ENCODE measurements at regions of chr4 and their contacts with region 1.

Region 1: DNA sequence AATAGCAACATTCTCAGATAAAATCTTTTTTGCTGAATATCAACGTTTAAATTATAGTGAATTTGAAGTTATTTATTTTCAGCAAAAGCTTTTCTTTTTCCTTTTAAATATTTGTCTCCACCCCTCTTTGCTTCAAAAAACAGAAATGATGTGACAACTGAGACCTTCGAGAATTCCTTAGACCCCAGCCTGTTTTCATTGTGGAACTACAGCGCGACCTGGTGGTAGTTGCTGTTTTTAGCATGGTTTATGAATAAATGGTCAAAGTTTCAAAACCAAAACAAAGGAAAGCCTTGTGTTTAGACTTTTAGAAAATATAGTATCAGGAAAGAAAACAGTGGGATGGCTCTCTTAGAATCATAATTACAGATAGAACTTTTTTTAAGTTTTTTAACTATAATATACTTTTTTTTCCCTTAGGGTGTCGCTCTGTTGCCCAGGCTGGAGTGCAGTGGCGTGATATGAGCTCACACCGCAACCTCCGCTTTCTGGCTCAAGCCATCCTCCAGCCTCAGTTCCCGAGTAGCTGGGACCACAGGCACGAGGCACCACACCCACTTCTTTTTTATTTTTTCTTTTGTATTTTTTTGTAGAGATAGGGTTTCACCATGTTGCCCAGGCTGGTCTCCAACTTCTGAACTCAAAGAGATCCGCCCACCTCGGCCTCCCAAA is 26.8 kb upstream of the TMEM184C start:
- DNase-seq: peak in 1 of 2 experiments; percentile 82
- H3K4me3 ChIP-seq: no peak overlapping the region
- H3K27ac ChIP-seq: no peak overlapping the region
- H3K4me1 ChIP-seq: peaks cover 0 to 3% (median 0%) of the 10 kb centered on the region in 4 experiments; a peak in 1 of 7 replicates
- H3K27me3 ChIP-seq: no peaks in the 10 kb centered on the region
- CTCF ChIP-seq: peak in 2 of 3 experiments; percentile 70; a peak in 3 of 4 replicates
- EP300 ChIP-seq: no peak
- POLR2A ChIP-seq: no peak
- RAD21 ChIP-seq: peak; percentile 93 to 95

Region 2: GRCh38 chr4:147111033-147111367 is 479.4 kb before region 1 on chr4:
- CTCF ChIA-PET with region 1: interaction called, 20 read pairs
- POLR2A ChIA-PET with region 1: no interaction called
- DNase-seq: no peak
- H3K4me3 ChIP-seq: no peak overlapping the region
- H3K27ac ChIP-seq: no peak overlapping the region
- H3K4me1 ChIP-seq: no peaks in the 10 kb centered on the region
- H3K27me3 ChIP-seq: no peaks in the 10 kb centered on the region
- CTCF ChIP-seq: no peak
- EP300 ChIP-seq: no peak
- POLR2A ChIP-seq: no peak
- RAD21 ChIP-seq: peak; percentile 43 to 45; a peak in 3 of 4 replicates

Region 3: GRCh38 chr4:147160908-147161513 is 429.4 kb before region 1 on chr4:
- CTCF ChIA-PET with region 1: interaction called, 22 read pairs
- POLR2A ChIA-PET with region 1: no interaction called
- DNase-seq: no peak
- H3K4me3 ChIP-seq: no peak overlapping the region
- H3K27ac ChIP-seq: no peak overlapping the region
- H3K4me1 ChIP-seq: no peaks in the 10 kb centered on the region; a peak in 2 of 7 replicates
- H3K27me3 ChIP-seq: peaks cover 0 to 4% (median 0%) of the 10 kb centered on the region in 4 experiments; a peak in 2 of 7 replicates
- CTCF ChIP-seq: peak in 2 of 3 experiments; percentile 73 to 76; a peak in 3 of 4 replicates
- EP300 ChIP-seq: no peak
- POLR2A ChIP-seq: no peak
- RAD21 ChIP-seq: peak; percentile 81 to 82

Region 4: DNA sequence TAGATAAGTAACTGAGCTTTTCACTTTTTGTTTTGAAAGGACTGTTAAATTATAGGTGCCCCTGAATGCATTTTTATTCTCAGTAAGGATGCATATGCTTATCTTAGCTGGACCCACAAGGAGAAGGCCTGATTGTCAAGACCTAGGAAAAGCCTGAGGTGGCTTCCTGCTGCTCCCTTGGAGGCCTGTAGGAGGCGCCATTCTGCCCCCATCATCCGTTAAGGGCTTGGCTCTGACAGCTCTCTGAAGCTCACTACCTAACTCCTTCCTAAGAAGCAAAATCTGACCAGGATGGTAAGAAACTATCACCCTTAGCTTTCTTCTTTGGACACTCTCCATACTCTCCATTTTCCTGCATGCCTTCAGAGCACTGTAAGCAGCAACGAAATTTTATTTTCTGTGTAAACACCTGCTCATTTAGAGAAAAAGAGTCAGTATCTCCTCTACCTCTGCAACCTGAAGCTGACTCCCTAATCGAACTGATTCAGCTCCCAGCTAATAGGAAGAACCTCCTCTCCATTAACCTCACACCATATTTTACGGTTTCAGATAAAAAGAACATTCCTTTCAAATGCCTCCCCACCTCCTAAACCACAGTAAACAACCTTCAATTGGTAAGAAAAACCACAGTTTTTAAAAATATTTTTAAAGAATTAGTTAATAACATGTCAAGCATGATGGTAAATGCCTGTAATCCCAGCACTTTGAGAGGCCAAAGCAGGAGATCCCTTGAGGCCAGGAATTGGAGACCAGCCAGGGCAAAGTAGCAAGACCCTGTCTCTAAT is 182.9 kb before region 1 on chr4:
- CTCF ChIA-PET with region 1: interaction called, 15 read pairs
- POLR2A ChIA-PET with region 1: no interaction called
- DNase-seq: peak; percentile 25 to 56
- H3K4me3 ChIP-seq: no peak overlapping the region
- H3K27ac ChIP-seq: no peak overlapping the region
- H3K4me1 ChIP-seq: no peaks in the 10 kb centered on the region
- H3K27me3 ChIP-seq: no peaks in the 10 kb centered on the region
- CTCF ChIP-seq: peak; percentile 75 to 92 (median 87)
- EP300 ChIP-seq: no peak
- POLR2A ChIP-seq: no peak
- RAD21 ChIP-seq: peak; percentile 62 to 73

Region 5: GRCh38 chr4:147440442-147440841 is 149.9 kb before region 1 on chr4:
- CTCF ChIA-PET with region 1: no interaction called
- POLR2A ChIA-PET with region 1: no interaction called
- DNase-seq: no peak
- H3K4me3 ChIP-seq: no peak overlapping the region
- H3K27ac ChIP-seq: no peak overlapping the region
- H3K4me1 ChIP-seq: no peaks in the 10 kb centered on the region
- H3K27me3 ChIP-seq: no peaks in the 10 kb centered on the region
- CTCF ChIP-seq: no peak
- EP300 ChIP-seq: no peak
- POLR2A ChIP-seq: no peak
- RAD21 ChIP-seq: no peak

Region 6: GRCh38 chr4:147480891-147481576 is 109.4 kb before region 1 on chr4 and contains the start of gene EDNRA:
- CTCF ChIA-PET with region 1: interaction called, 11 read pairs
- POLR2A ChIA-PET with region 1: no interaction called
- DNase-seq: peak in 1 of 2 experiments; percentile 66
- H3K4me3 ChIP-seq: peak within 1 kb of the TSS; percentile 59 to 83 (median 68)
- H3K27ac ChIP-seq: no peak within 1 kb of the TSS
- H3K4me1 ChIP-seq: no peaks in the 10 kb centered on the region; a peak in 1 of 7 replicates
- H3K27me3 ChIP-seq: peaks cover 4 to 21% (median 17%) of the 10 kb centered on the region in 4 experiments
- CTCF ChIP-seq: no peak
- EP300 ChIP-seq: no peak
- POLR2A ChIP-seq: no peak
- RAD21 ChIP-seq: no peak
- total RNA-seq, gene EDNRA: 3.3 TPM in 2 replicates

Region 7: GRCh38 chr4:147518846-147519767 is 71.3 kb before region 1 on chr4:
- CTCF ChIA-PET with region 1: interaction called, 22 read pairs
- POLR2A ChIA-PET with region 1: interaction called, 5 read pairs
- DNase-seq: peak in 1 of 2 experiments; percentile 59
- H3K4me3 ChIP-seq: no peak overlapping the region
- H3K27ac ChIP-seq: no peak overlapping the region
- H3K4me1 ChIP-seq: no peaks in the 10 kb centered on the region
- H3K27me3 ChIP-seq: no peaks in the 10 kb centered on the region
- CTCF ChIP-seq: peak in 2 of 3 experiments; percentile 75 to 90; a peak in 3 of 4 replicates
- EP300 ChIP-seq: no peak
- POLR2A ChIP-seq: no peak
- RAD21 ChIP-seq: peak; percentile 78 to 79

Region 8: GRCh38 chr4:147605499-147605898 is 15.1 kb after region 1 on chr4:
- CTCF ChIA-PET with region 1: interaction called, 11 read pairs
- POLR2A ChIA-PET with region 1: no interaction called
- DNase-seq: no peak
- H3K4me3 ChIP-seq: no peak overlapping the region
- H3K27ac ChIP-seq: no peak overlapping the region
- H3K4me1 ChIP-seq: no peaks in the 10 kb centered on the region
- H3K27me3 ChIP-seq: no peaks in the 10 kb centered on the region
- CTCF ChIP-seq: no peak
- EP300 ChIP-seq: no peak
- POLR2A ChIP-seq: no peak
- RAD21 ChIP-seq: no peak

Region 9: DNA sequence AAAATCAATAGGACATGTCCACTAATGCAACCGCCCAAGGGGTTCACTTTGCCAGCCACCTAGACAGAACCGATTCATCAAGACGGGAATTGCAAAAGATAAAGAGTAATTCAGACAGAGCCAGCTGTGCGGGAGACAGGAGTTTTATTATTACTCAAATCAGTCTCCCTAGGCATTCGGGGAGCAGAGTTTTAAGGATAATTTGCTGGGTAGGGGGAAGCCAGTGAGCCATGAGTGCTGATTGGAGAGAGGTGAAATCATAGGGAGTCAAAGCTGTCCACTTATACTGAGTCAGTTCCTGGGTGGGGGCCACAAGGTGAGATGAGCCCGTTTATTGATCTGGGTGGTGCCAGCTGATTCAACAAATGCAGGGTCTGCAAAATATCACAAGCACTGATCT is 35.3 kb after region 1 on chr4:
- CTCF ChIA-PET with region 1: no interaction called
- POLR2A ChIA-PET with region 1: no interaction called
- DNase-seq: no peak
- H3K4me3 ChIP-seq: no peak overlapping the region
- H3K27ac ChIP-seq: no peak overlapping the region
- H3K4me1 ChIP-seq: peaks cover 4 to 19% (median 6%) of the 10 kb centered on the region in 4 experiments; a peak in 5 of 7 replicates
- H3K27me3 ChIP-seq: no peaks in the 10 kb centered on the region
- CTCF ChIP-seq: no peak
- EP300 ChIP-seq: no peak
- POLR2A ChIP-seq: no peak
- RAD21 ChIP-seq: no peak

Region 10: GRCh38 chr4:147707865-147708672 is 117.7 kb after region 1 on chr4:
- CTCF ChIA-PET with region 1: no interaction called
- POLR2A ChIA-PET with region 1: no interaction called
- DNase-seq: peak in 1 of 2 experiments; percentile 53
- H3K4me3 ChIP-seq: no peak overlapping the region
- H3K27ac ChIP-seq: no peak overlapping the region
- H3K4me1 ChIP-seq: no peaks in the 10 kb centered on the region
- H3K27me3 ChIP-seq: no peaks in the 10 kb centered on the region
- CTCF ChIP-seq: peak in 2 of 3 experiments; percentile 63 to 81; a peak in 3 of 4 replicates
- EP300 ChIP-seq: no peak
- POLR2A ChIP-seq: no peak
- RAD21 ChIP-seq: peak; percentile 59 to 73

Measured in H1 (cell line).